Head of caudate nucleus (tissue), 42 donors: ENCODE measurements at regions of chrX and their contacts with region 1.

Region 1: DNA sequence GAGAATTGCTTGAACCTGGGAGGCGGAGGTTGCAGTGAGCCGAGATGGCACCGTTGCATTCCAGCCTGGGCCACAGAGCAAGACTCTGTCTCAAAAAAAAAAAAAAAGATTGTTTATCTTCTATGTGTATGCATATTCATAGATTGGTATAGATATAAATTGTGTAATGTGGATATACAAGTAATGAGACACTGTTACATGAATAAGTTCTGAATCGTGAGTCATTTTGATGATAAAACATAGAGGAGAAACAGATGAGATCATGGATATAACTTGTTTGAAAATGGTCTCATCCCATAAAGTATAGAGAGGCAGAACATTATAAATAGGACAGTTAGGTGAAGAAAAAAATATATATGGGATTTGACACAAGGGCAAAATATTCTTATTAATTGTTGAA is 628.0 kb downstream of the IL1RAPL1 start:
- DNase-seq: no peak

Region 2: GRCh38 chrX:29155286-29155685 is 60.0 kb before region 1 on chrX:
- intact Hi-C with region 1: loop called (anchors 10 kb)
- DNase-seq: no peak